Left cardiac atrium (tissue), 4 donors: ENCODE measurements at regions of chr1 and their contacts with region 1.

Region 1: DNA sequence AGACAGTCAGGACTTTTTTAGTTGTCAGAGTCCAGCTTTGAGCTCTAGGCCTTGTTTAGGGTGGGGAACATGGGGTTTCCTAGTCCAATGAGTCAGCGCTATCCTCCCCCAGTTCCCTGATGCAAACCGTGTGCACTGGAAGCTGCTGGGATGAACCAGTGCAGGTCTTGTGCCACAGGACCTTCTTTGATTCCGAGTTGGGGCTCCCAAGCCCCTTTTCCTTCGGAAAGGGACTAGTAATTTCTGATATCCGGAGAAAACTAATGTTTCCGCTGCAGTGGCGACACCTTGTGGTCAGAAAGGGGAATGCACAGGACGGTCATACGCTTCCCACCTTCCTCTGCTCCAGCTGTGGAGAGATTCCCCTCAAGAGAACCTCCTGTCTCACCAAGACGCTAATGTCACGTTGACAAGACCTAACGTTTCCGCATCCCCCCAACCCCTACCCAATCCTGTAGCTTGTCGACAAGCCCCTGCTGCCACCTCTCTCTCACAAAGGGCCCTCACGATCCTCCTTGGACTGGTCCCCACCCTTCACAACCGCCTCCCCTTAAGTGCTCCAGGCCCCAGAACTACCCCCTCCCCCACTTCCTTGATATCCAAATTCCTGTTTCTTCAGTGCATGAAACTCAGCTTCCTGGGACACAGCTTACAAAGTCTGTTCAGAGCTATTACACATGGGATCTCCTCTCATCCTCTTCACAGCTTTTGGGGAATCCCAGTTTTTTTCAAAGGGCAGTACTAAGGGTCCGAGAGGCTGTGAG is 30.9 kb downstream of the GPA33 start:
- DNase-seq: peak; percentile 73
- ATAC-seq: peak; percentile 28 to 67

Region 2: GRCh38 chr1:166884040-166884642 is 175.1 kb before region 1 on chr1:
- intact Hi-C with region 1: loop called in 1 of 2 experiments (anchors 1 kb)
- DNase-seq: peak; percentile 51
- ATAC-seq: peak; percentile 90

Region 3: GRCh38 chr1:166902271-166902670 is 157.0 kb before region 1 on chr1:
- intact Hi-C with region 1: loop called in 1 of 2 experiments (anchors 5 kb)
- DNase-seq: no peak
- ATAC-seq: peak in 1 of 2 donors; percentile 70

Region 4: DNA sequence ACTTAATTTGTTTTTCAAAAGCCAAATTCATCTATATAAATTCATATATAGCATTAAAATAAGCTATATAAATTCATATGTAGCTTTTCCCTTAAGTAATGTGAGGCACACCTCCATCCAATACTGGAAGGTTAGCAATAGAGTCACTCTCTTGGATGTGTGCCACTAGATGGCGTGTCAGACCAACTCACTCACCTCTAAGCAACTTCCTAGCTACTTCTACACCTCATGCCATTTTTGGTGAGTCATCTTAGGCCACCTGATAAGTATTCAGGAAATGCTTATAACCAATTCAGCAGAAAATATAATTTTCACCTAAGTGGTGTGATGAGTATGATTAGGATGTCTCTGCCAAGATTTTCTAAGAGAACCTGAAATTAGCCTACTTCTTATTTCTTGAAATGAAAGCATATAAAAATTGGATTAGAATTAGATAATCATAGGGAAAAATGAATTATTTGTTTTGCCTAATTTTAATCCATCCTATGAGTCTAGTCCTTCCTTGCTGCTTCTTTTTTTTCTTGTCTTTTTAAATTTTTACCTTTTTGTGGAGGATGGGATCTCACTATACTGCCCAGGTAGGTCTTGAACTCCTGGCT is 148.7 kb before region 1 on chr1:
- intact Hi-C with region 1: loop called in 1 of 2 experiments (anchors 1 kb)
- DNase-seq: peak; percentile 51
- ATAC-seq: peak; percentile 93 to 95

Region 5: DNA sequence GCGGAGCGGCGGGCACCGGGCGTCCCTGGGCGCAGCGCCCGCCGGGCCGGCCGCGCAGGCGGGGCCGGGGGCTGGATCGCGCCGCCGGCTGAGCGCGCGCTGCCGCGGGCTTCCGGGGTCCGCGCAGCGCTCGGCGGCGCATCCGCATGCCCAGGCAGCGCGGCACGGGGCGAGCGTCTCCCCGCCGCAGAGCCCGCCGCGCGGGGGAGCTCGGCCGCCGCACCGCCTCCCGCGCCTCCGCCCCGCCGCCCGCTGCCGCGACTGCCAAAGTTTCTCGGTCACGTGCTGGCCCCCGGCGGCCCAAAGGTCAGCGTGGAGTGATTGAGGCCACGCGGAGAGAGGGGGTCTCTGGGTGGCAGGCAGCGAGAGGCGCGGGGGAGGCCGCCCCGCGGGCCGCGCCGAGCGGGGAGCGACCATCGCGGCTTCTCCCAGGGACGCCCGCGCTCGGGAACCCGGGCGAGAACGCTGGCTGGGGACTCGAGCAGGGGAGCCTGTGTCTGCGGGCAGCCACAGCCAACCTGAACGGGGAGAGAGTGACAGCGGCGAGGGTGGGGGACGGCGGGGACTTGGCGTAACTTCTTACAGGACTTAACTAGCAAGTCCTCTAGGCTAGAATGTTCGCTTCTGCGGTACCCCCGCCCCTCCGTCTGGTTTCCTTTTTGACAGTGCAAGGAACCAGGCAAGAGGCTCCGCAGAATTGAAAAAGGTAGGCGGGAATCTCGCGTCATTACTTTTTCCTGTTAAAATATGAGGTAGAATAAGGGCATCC is 83.7 kb before region 1 on chr1 and contains the start of gene ILDR2:
- intact Hi-C with region 1: loop called in 1 of 2 experiments (anchors 10 kb)
- DNase-seq: peak; percentile 45
- ATAC-seq: peak; percentile 82 to 88
- total RNA-seq, gene ILDR2: 3.2 to 7.3 TPM